ENCODE measurements at regions of chr6 and their contacts with region 1.

Region 1: GRCh38 chr6:154095571-154095970 is 56.5 kb downstream of the OPRM1 start:
- DNase-seq: no peak
- ATAC-seq: no peak
- H3K4me3 Mint-ChIP-seq: no peak overlapping the region
- H3K27ac Mint-ChIP-seq: no peak overlapping the region
- H3K4me1 Mint-ChIP-seq: no peaks in the 10 kb centered on the region
- H3K27me3 Mint-ChIP-seq: no peaks in the 10 kb centered on the region

Region 2: DNA sequence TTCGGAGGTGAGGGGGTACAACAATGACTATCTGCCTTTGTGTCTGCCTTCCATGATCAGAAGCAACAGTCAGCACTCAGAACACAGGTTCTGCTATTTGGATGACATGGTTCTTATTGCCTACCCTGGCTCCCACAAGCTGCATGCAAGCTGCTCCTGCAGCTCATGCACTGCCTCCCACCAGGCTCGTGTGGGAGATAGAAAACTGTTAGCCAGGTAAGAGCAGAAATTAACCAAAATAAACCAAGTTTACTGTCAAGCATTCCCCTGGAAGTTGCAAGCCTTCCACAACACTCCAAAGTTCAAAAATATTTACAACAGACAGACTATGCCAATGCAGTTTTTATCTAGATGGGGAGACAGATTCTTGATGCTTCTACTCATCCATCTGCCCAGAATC is 25.5 kb before region 1 on chr6:
- CTCF ChIA-PET with region 1: no interaction called
- POLR2A ChIA-PET with region 1: no interaction called
- intact Hi-C with region 1: no loop called
- DNase-seq: no peak
- ATAC-seq: no peak
- H3K4me3 Mint-ChIP-seq: no peak overlapping the region
- H3K27ac Mint-ChIP-seq: no peak overlapping the region
- H3K4me1 Mint-ChIP-seq: no peaks in the 10 kb centered on the region
- H3K27me3 Mint-ChIP-seq: peaks cover 9% of the 10 kb centered on the region

Region 3: GRCh38 chr6:154080461-154081189 is 14.9 kb before region 1 on chr6:
- CTCF ChIA-PET with region 1: no interaction called
- POLR2A ChIA-PET with region 1: no interaction called
- intact Hi-C with region 1: loop called (anchors 1 kb)
- DNase-seq: no peak
- ATAC-seq: no peak
- H3K4me3 Mint-ChIP-seq: no peak overlapping the region
- H3K27ac Mint-ChIP-seq: no peak overlapping the region
- H3K4me1 Mint-ChIP-seq: no peaks in the 10 kb centered on the region
- H3K27me3 Mint-ChIP-seq: peaks cover 2% of the 10 kb centered on the region

Region 4: DNA sequence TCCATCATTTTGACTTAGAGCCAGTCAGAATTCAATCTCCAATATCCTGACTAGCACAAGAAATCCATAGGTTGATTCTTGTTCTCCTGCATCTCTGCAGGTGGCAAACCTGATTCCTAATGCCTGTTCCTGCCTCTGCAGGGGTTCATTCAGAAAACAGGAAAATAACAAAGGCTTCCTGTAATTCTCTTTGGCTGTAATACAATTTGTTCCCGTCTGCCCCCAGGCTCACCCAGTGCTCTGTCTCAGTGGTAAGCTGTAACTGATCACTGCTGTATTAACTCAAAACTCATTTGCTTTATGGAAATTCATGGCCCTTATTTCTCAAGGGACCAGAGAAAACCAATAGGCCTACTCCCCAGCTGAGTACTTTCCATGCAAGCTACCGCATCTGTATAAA is 32.1 kb after region 1 on chr6:
- CTCF ChIA-PET with region 1: no interaction called
- POLR2A ChIA-PET with region 1: no interaction called
- intact Hi-C with region 1: no loop called
- DNase-seq: no peak
- ATAC-seq: no peak
- H3K4me3 Mint-ChIP-seq: no peak overlapping the region
- H3K27ac Mint-ChIP-seq: no peak overlapping the region
- H3K4me1 Mint-ChIP-seq: peaks cover 3% of the 10 kb centered on the region
- H3K27me3 Mint-ChIP-seq: no peaks in the 10 kb centered on the region

Region 5: GRCh38 chr6:154457881-154458284 is 362.3 kb after region 1 on chr6:
- CTCF ChIA-PET with region 1: no interaction called
- POLR2A ChIA-PET with region 1: no interaction called
- intact Hi-C with region 1: no loop called
- DNase-seq: no peak
- ATAC-seq: no peak
- H3K4me3 Mint-ChIP-seq: no peak overlapping the region
- H3K27ac Mint-ChIP-seq: no peak overlapping the region
- H3K4me1 Mint-ChIP-seq: peaks cover 3% of the 10 kb centered on the region
- H3K27me3 Mint-ChIP-seq: peaks cover 9% of the 10 kb centered on the region

Measured in activated CD4-positive, alpha-beta T cell treated with anti-CD3 and anti-CD28 coated beads for 36 hours (primary cell).